Activated B cell treated with CpG ODN at 0.5 μM for 24 hours (primary cell): ENCODE measurements at regions of chr19 and their contacts with region 1.

Region 1: DNA sequence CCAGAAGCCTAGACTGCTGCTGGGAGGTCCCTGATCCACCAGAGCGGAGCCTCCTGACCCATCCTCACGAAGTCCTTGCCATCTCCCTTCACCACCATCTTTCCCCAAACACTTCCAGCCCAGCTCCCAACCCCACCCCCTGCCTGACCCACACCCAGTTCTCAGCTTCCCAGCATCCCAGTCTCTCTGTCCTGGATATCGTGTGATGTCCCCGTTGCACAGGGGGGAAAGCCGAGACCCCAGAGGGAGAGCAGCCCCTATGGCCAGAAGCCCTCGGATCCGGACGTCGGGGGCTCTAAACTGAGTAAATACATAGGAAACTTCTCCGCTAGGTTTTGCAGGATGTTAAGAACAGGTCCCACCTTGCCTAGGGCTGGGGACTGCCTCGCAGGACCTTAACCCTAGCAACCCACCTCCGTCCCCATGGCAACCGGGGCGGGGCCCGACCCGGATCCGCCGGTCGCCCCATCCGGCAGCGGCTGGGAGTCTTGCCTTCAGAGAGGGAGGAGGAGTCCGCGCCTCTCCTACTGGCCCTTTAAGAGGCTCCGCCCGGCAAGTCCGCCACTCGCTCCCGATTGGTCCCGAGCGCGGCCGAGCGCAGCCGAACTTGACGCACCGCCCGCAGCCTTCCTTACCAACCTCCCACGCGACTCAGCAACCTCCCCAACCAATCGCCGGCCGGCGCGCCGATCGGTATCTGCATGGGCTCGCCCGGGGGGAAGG is 451 bp upstream of the HMG20B start:
- DNase-seq: peak; percentile 94
- ATAC-seq: peak; percentile 95
- H3K4me3 Mint-ChIP-seq: peak overlapping the region; percentile 81
- H3K27ac Mint-ChIP-seq: peak overlapping the region; percentile 53
- H3K4me1 Mint-ChIP-seq: peaks cover 19% of the 10 kb centered on the region
- H3K27me3 Mint-ChIP-seq: no peaks in the 10 kb centered on the region
- CTCF ChIP-seq: no peak

Region 2: GRCh38 chr19:3185482-3186376 is 386.6 kb before region 1 on chr19 and contains the start of gene NCLN:
- CTCF ChIA-PET with region 1: no interaction called
- POLR2A ChIA-PET with region 1: no interaction called
- intact Hi-C with region 1: loop called (anchors 10 kb)
- DNase-seq: peak; percentile 98
- ATAC-seq: peak; percentile 86
- H3K4me3 Mint-ChIP-seq: peak within 1 kb of the TSS; percentile 93
- H3K27ac Mint-ChIP-seq: peak within 1 kb of the TSS; percentile 95
- H3K4me1 Mint-ChIP-seq: peaks cover 74% of the 10 kb centered on the region
- H3K27me3 Mint-ChIP-seq: no peaks in the 10 kb centered on the region
- CTCF ChIP-seq: no peak
- total RNA-seq, gene NCLN: 61.1 and 64.8 TPM in 2 replicates

Region 3: GRCh38 chr19:3557461-3558248 is 14.6 kb before region 1 on chr19 and contains the start of gene MFSD12:
- CTCF ChIA-PET with region 1: no interaction called
- POLR2A ChIA-PET with region 1: interaction called, 7 read pairs
- intact Hi-C with region 1: loop called (anchors 1 kb)
- DNase-seq: peak; percentile 94
- ATAC-seq: peak; percentile 86
- H3K4me3 Mint-ChIP-seq: peak within 1 kb of the TSS; percentile 89
- H3K27ac Mint-ChIP-seq: peak within 1 kb of the TSS; percentile 86
- H3K4me1 Mint-ChIP-seq: peaks cover 57% of the 10 kb centered on the region
- H3K27me3 Mint-ChIP-seq: no peaks in the 10 kb centered on the region
- CTCF ChIP-seq: no peak
- total RNA-seq, gene MFSD12: 59.2 and 76.9 TPM in 2 replicates

Region 4: DNA sequence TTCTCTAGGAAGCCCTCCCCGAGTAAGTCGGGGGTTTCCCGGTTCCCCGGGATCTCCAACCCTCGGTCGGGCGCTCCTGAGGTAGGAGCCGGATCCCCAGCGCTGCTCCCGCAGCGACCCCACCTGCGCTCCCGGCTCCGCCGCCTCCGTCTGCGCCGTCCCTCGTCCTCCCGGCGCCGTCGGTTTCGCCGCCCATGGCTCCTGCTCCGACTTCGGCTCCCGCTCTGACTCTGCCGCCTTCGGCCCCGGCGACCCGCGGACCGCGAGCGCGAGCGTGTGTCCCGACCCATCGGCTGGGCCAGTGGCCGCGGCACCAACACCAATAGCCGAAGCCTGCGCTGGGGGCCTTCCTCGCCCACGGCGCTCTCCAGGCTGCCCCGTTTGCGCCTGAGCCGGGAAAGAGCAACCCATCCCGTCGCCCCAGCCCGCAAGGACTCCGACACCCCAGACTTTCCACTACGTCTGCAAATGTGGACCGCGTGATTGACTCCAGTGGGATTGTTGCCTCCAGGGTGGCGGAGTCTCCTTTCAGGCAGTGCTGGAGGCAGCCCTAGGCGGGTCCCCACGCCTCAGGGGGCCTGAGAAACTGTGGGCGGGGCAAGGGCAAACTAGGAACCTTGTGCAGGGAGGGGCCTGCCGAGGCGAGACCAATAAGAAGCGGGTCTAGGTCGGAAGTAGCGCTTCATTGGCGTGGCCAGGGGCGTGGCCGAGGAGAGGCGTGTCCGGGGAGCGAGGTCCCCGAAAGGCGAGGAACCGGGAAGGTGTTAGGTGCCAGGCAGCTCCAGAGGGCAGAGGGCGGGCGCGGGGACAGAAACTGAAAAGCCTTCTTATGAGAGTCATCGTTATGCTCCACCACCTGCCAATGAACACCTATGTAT is 54.4 kb after region 1 on chr19 and contains the start of gene CACTIN:
- CTCF ChIA-PET with region 1: no interaction called
- POLR2A ChIA-PET with region 1: no interaction called
- intact Hi-C with region 1: loop called (anchors 1 kb)
- DNase-seq: peak; percentile 95
- ATAC-seq: peak; percentile 98
- H3K4me3 Mint-ChIP-seq: peak within 1 kb of the TSS; percentile 97
- H3K27ac Mint-ChIP-seq: peak within 1 kb of the TSS; percentile 99
- H3K4me1 Mint-ChIP-seq: peaks cover 30% of the 10 kb centered on the region
- H3K27me3 Mint-ChIP-seq: no peaks in the 10 kb centered on the region
- CTCF ChIP-seq: no peak
- total RNA-seq, gene CACTIN: 45.3 and 48.1 TPM in 2 replicates

Region 5: GRCh38 chr19:3970808-3971598 is 398.7 kb after region 1 on chr19 and contains the start of gene DAPK3:
- CTCF ChIA-PET with region 1: no interaction called
- POLR2A ChIA-PET with region 1: no interaction called
- intact Hi-C with region 1: loop called (anchors 5 kb)
- DNase-seq: peak; percentile 94
- ATAC-seq: peak; percentile 97
- H3K4me3 Mint-ChIP-seq: peak within 1 kb of the TSS; percentile 88
- H3K27ac Mint-ChIP-seq: peak within 1 kb of the TSS; percentile 84
- H3K4me1 Mint-ChIP-seq: peaks cover 27% of the 10 kb centered on the region
- H3K27me3 Mint-ChIP-seq: no peaks in the 10 kb centered on the region
- CTCF ChIP-seq: no peak
- total RNA-seq, gene DAPK3: 37.5 and 42.2 TPM in 2 replicates

Region 6: DNA sequence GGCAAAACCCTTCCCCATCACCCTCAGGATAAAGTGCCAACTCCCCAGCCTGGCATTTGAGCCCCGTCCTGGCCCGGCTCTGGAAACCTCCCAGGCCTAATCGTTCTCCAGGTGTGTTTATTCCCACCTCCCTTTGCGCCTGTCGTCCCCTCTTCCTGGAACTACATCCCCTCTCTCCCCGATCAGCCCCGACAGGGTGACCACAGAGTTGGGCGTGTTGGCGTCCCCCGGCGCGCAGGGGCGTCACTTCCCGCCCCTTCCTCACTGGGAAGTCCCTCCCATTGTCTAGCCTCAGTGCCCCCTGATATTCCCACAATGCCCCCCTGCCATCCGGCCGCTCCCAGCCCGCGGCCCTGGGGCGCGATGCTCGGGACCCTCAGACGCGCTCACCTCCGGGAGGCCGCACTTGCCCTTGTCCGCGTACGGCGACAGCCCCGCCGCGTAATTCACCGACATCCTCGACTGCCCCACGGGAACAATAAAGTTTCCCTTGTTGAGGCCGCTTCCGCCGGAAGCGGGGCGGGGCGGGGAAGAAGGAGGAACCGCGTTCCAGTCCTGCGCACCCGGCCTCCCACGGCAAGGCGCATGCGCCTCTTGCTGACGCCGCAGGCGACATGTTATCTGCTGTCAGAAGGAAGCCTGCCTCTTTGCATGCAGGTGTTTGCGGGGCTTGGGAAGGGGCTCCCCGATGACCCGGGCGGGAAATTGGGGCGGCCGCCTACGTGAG is 610.0 kb after region 1 on chr19 and contains the starts of genes ANKRD24 and SIRT6:
- CTCF ChIA-PET with region 1: no interaction called
- POLR2A ChIA-PET with region 1: no interaction called
- intact Hi-C with region 1: loop called (anchors 1 kb)
- DNase-seq: peak; percentile 96
- ATAC-seq: peak; percentile 84
- H3K4me3 Mint-ChIP-seq: peak within 1 kb of the TSS; percentile 97
- H3K27ac Mint-ChIP-seq: peak within 1 kb of the TSS; percentile 94
- H3K4me1 Mint-ChIP-seq: peaks cover 35% of the 10 kb centered on the region
- H3K27me3 Mint-ChIP-seq: no peaks in the 10 kb centered on the region
- CTCF ChIP-seq: no peak
- total RNA-seq, gene ANKRD24: 0.42 and 0.49 TPM in 2 replicates
- total RNA-seq, gene SIRT6: 34.1 and 36.8 TPM in 2 replicates